Psoas muscle (tissue), 8 donors: ENCODE measurements at regions of chr3 and their contacts with region 1.

Region 1: GRCh38 chr3:143951351-143951971 is 20.2 kb upstream of the DIPK2A start:
- DNase-seq: no peak
- ATAC-seq: no peak
- H3K4me3 ChIP-seq: no peak overlapping the region
- H3K27ac ChIP-seq: no peak overlapping the region
- H3K4me1 ChIP-seq: no peaks in the 10 kb centered on the region
- H3K27me3 ChIP-seq: no peaks in the 10 kb centered on the region
- CTCF ChIP-seq: peak; percentile 51

Region 2: GRCh38 chr3:143775459-143775858 is 176.0 kb before region 1 on chr3:
- intact Hi-C with region 1: loop called (anchors 5 kb)
- DNase-seq: no peak
- ATAC-seq: peak in 3 of 4 donors; percentile 48 to 86 (median 50)
- H3K4me3 ChIP-seq: peak overlapping the region; percentile 33
- H3K27ac ChIP-seq: no peak overlapping the region
- H3K4me1 ChIP-seq: no peaks in the 10 kb centered on the region
- H3K27me3 ChIP-seq: no peaks in the 10 kb centered on the region
- CTCF ChIP-seq: peak; percentile 48

Region 3: DNA sequence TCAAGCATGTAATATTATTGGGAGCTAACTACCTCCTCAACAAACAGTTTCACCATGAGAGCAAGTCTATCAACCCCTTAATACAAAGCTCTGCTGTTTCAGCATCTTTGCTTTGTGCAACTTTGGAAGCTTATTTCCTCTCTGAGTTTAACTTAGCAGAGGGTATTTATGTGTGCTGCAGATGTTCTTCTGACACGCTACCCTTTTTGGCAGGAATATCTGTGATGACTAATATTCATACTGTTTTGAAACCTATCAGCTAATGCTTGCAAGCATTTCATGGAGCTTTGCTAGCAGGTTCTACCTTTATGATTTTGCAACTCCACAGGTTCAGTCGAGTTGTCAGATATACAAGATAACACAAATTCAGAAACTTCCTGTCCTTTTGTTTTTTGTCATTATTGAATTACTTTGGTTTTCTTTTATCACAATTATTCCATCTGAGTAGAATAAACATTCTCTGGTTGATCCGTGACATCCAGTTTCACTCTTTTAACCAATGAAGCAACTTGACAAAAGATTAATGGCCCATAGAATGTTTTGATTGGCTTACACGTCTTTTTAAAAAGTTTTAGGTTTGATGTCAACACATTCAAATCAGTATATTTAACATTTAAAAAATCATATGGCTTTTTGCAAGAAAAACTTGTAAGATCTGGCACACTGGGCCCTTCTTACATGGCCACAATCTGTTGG is 101.5 kb before region 1 on chr3:
- intact Hi-C with region 1: loop called in 1 of 2 experiments (anchors 10 kb)
- DNase-seq: no peak
- ATAC-seq: peak; percentile 32 to 77 (median 70)
- H3K4me3 ChIP-seq: no peak overlapping the region
- H3K27ac ChIP-seq: no peak overlapping the region
- H3K4me1 ChIP-seq: peaks cover 7% of the 10 kb centered on the region
- H3K27me3 ChIP-seq: no peaks in the 10 kb centered on the region
- CTCF ChIP-seq: no peak

Region 4: DNA sequence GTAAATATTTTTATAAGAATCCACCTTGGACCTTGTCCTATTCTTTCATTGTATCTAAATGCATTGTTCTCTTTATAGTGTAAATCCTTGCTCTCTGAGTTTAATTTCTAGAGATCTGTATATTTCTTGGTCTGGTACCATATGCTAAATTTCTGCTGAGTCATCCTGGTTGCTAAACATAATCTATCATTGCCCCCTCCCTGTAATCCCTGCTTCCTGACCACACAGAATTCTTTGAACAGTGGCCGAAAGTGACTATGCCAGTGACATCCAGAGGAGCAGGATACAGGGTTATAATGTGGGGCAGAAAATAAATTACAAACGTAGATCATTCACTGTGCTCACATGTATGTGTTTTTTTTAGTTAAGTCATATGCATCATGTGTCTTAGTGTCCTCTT is 163.3 kb after region 1 on chr3:
- intact Hi-C with region 1: no loop called
- DNase-seq: no peak
- ATAC-seq: no peak
- H3K4me3 ChIP-seq: no peak overlapping the region
- H3K27ac ChIP-seq: no peak overlapping the region
- H3K4me1 ChIP-seq: no peaks in the 10 kb centered on the region
- H3K27me3 ChIP-seq: no peaks in the 10 kb centered on the region
- CTCF ChIP-seq: no peak